ENCODE measurements at regions of chr16 and their contacts with region 1.

Region 1: DNA sequence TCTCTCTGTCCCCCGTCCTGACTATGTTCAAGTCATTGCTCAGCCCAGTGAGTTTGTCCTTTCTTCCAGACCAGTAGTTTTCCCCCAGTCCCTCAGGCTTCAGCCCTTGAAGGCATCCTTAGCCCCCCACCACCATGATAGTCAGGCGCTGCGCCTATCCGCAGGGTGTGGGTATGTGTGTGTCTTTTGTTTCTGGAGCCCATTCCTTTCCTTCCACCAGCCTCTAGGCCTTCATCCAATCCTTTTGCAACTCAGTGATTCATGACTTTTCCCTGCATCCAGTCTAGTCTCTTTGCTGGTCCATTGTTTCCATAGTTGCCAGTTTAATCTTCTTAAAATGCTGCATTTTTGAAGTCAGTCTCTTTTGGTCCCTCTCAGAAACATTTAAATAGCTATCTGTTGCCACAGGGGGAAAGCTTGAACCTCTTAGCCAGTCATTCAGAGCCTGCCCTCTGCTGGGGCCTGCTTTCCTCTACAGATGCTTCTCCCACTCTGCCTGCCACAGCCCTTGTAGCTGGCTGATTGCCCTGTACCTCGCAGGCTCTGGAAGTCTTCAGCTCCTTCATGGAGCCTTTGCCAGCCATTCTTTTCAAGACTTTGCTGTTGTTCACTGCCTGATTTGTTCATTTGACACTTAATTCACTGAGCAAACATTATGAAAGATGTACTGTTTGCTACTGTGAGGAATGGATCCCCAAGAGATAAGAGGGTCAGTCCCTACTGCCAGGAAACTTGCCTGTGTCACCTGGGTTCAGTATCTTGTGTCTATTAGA is 55.9 kb upstream of the ADCY7 start:
- DNase-seq: peak; percentile 36 to 76 (median 59)
- ATAC-seq: peak; percentile 86 to 95 (median 94)
- H3K4me3 ChIP-seq: no peak overlapping the region
- H3K4me3 Mint-ChIP-seq: no peak overlapping the region
- H3K27ac ChIP-seq: no peak overlapping the region
- H3K27ac Mint-ChIP-seq: peak overlapping the region; percentile 72 to 77
- H3K4me1 ChIP-seq: peaks cover 0 to 4% of the 10 kb centered on the region in 2 experiments
- H3K4me1 Mint-ChIP-seq: peaks cover 33 to 41% (median 36%) of the 10 kb centered on the region in 3 donors
- H3K27me3 ChIP-seq: no peaks in the 10 kb centered on the region
- H3K27me3 Mint-ChIP-seq: no peaks in the 10 kb centered on the region

Region 2: GRCh38 chr16:48911700-48912099 is 1298.8 kb before region 1 on chr16:
- CTCF ChIA-PET with region 1: no interaction called
- POLR2A ChIA-PET with region 1: no interaction called
- DNase-seq: no peak
- ATAC-seq: no peak
- H3K4me3 ChIP-seq: no peak overlapping the region
- H3K4me3 Mint-ChIP-seq: no peak overlapping the region
- H3K27ac ChIP-seq: no peak overlapping the region
- H3K27ac Mint-ChIP-seq: no peak overlapping the region
- H3K4me1 ChIP-seq: no peaks in the 10 kb centered on the region
- H3K4me1 Mint-ChIP-seq: no peaks in the 10 kb centered on the region
- H3K27me3 ChIP-seq: no peaks in the 10 kb centered on the region
- H3K27me3 Mint-ChIP-seq: no peaks in the 10 kb centered on the region

Region 3: GRCh38 chr16:50024684-50025536 is 185.5 kb before region 1 on chr16 and contains the start of gene CNEP1R1:
- CTCF ChIA-PET with region 1: interaction called, 30 to 52 read pairs
- POLR2A ChIA-PET with region 1: interaction called in 1 of 2 experiments, 8 read pairs
- DNase-seq: peak; percentile 76 to 96 (median 87)
- ATAC-seq: peak; percentile 94 to 97 (median 96)
- H3K4me3 ChIP-seq: peak within 1 kb of the TSS; percentile 75 to 80
- H3K4me3 Mint-ChIP-seq: peak within 1 kb of the TSS; percentile 92 to 94 (median 93)
- H3K27ac ChIP-seq: peak within 1 kb of the TSS; percentile 56
- H3K27ac Mint-ChIP-seq: peak within 1 kb of the TSS; percentile 87 to 90
- H3K4me1 ChIP-seq: peaks cover 8 to 18% of the 10 kb centered on the region in 2 experiments
- H3K4me1 Mint-ChIP-seq: peaks cover 26 to 35% (median 34%) of the 10 kb centered on the region in 3 donors
- H3K27me3 ChIP-seq: peaks cover 0 to under 1% of the 10 kb centered on the region in 2 experiments
- H3K27me3 Mint-ChIP-seq: no peaks in the 10 kb centered on the region
- total RNA-seq, gene CNEP1R1: 26.7 to 32.9 (median 27.5) TPM

Region 4: DNA sequence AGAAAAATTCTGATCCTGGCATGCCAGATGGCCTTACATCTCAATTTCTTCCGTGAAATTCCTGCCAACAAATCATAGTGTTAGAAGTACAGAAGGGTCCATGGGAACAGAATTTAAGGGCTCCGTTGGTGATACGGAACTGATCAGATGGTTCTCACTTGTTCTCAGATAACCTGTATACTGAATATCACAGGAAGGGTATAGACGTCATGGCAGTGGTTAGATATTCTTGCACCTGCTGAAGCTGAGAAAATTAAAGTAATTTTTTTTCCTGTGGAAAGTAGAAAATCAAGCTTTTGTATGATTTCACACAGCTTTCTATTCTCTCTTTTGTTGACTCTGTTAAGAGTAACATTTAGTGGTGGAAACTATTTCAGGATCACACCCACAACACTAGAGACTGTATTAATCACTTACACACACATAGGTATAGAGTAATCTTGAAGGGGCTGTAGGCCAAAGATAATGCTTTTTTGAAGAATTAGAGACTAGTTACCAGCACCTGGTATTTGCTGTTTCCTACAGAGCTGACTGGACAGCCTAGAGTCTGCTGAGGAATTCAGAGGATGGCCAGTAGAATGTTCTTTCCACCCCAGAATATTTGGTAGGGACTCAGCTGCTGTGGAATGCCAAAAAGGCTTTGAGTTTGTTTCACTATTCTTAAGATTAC is 49.8 kb before region 1 on chr16:
- CTCF ChIA-PET with region 1: interaction called, 3 to 12 read pairs
- POLR2A ChIA-PET with region 1: no interaction called
- DNase-seq: peak in 3 of 35 experiments; percentile 4 to 62 (median 21)
- ATAC-seq: peak; percentile 41 to 86 (median 62)
- H3K4me3 ChIP-seq: no peak overlapping the region
- H3K4me3 Mint-ChIP-seq: peak overlapping the region in 1 of 3 donors; percentile 66
- H3K27ac ChIP-seq: peak overlapping the region; percentile 62
- H3K27ac Mint-ChIP-seq: peak overlapping the region; percentile 64 to 76
- H3K4me1 ChIP-seq: peaks cover 25 to 34% of the 10 kb centered on the region in 2 experiments
- H3K4me1 Mint-ChIP-seq: peaks cover 67 to 72% (median 70%) of the 10 kb centered on the region in 3 donors
- H3K27me3 ChIP-seq: no peaks in the 10 kb centered on the region
- H3K27me3 Mint-ChIP-seq: no peaks in the 10 kb centered on the region

Region 5: DNA sequence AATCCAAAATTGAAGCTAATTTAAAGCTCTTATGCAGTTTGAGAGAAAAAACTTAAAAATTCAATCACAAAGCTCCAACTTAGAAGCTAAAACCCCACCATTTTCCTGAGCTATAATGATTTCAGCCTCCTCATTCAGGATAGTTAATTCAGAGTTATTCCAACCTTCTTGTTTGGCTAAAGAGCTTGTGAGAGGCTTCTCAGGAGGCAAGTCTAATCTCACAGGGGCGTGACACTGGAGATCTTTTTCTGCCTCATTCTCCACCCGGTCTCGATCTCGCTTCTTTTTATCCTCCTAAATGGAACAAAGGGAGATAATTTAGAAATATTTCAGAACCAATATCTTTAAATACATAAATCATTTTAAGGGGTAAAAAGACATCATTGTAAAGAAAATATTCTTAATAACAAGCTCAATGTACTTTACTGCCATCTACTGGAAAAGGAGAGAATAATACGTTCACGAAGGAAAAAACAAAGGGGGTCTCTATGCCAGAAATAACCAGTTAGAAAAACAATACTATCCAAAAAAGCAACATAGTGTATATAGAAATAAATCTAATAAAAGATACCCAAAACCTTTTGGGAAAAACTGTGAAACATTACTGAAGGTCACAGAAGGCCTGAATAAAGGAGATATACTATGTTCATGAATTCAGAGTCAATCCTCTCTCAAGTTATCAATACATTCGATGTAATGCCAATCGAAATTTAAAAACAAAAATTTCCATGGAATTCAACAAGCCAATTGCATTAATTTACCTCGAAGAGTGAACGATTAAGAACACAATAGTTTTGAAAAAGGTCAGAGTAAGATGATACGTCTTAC is 144.4 kb after region 1 on chr16:
- CTCF ChIA-PET with region 1: interaction called, 3 to 18 read pairs
- POLR2A ChIA-PET with region 1: no interaction called
- DNase-seq: peak in 2 of 35 experiments; percentile 34 to 51
- ATAC-seq: no peak
- H3K4me3 ChIP-seq: no peak overlapping the region
- H3K4me3 Mint-ChIP-seq: no peak overlapping the region
- H3K27ac ChIP-seq: no peak overlapping the region
- H3K27ac Mint-ChIP-seq: peak overlapping the region; percentile 0 to 64
- H3K4me1 ChIP-seq: no peaks in the 10 kb centered on the region
- H3K4me1 Mint-ChIP-seq: peaks cover 24 to 54% (median 25%) of the 10 kb centered on the region in 3 donors
- H3K27me3 ChIP-seq: no peaks in the 10 kb centered on the region
- H3K27me3 Mint-ChIP-seq: no peaks in the 10 kb centered on the region

Region 6: GRCh38 chr16:50389900-50390299 is 179.4 kb after region 1 on chr16:
- CTCF ChIA-PET with region 1: interaction called in 1 of 2 experiments, 10 read pairs
- POLR2A ChIA-PET with region 1: no interaction called
- DNase-seq: no peak
- ATAC-seq: no peak
- H3K4me3 ChIP-seq: no peak overlapping the region
- H3K4me3 Mint-ChIP-seq: no peak overlapping the region
- H3K27ac ChIP-seq: no peak overlapping the region
- H3K27ac Mint-ChIP-seq: no peak overlapping the region
- H3K4me1 ChIP-seq: no peaks in the 10 kb centered on the region
- H3K4me1 Mint-ChIP-seq: peaks cover under 1 to 9% (median 1%) of the 10 kb centered on the region in 3 donors
- H3K27me3 ChIP-seq: peaks cover 0 to 17% of the 10 kb centered on the region in 2 experiments
- H3K27me3 Mint-ChIP-seq: peaks cover 0 to 7% of the 10 kb centered on the region in 2 donors

Measured in T-cell (primary cell).